ENCODE measurements at regions of chr5 and their contacts with region 1.

Region 1: DNA sequence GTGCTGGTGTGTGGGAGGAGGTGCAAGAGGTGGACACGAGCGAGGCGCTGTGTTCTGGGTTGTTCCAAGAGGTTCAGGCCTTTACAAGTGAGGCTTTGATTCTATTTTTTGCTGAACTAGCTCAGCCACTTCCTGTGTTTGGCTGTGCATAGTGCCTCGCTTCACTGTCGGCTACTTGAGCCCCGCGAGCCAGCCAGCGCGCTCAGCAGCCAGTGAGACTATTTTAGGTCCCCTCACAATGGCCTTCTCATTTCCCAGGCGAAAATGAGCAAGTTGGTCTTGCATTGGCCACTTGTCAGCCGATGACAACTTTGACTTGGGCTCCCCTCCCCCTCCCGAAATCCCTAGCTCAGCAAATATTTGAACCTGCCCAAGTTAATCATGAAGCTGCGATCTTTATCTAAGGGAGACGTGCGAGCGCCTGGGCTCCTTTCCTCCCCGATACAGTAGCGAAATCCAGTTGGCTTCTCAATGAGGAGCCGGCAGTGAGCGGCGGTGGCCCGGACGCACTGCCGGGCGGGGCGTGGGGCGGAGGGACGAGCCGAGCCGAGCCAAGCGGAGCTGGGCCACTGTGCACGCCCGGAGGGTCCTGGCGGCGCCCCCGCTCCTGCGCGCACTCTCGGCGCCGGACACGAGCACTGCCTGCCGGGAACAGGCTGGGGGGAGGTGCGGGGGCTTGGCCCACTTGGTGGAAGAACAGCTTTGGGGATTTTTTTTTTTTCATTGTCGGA is 72.6 kb downstream of the PIK3R1 start:
- DNase-seq: peak; percentile 73
- CTCF ChIP-seq: no peak

Region 2: DNA sequence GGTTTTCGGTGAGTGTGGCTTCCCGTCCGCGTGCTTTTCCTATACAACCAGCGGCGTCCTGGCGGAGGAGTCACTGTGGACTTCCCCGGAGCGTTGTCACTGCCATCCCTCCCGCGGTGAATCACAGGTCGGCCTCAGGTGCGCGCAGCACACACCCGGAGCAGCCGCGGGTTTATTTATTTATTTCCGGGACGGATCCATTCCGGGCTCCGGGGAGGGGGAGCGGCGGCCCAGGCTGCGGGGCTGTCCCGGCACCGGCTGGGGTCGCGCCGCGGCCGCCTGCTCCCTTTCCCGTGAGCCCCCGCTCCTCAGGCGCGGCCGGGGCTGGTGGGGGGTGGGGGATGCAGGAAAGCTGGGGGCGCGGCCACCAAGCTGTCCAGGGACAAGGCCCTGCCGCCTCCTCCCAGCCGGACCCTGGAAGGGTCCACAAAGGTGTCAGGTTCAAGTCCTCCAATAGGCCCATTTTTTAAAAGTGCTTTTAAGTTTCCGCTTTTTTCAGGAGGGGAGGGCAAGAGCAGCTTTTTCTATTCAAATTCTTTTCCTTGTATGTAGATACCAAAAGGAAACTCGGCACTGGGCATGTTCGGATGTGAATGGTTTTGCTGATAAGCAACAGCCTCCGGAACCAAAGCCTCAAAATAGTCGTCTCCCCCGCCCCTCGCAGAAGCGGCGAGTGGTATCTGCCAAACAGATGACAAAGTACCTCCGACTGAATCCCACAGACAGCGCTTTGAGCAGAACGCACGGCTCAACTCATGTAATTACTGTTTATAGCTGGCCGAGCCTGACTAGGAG is 1284.0 kb before region 1 on chr5:
- CTCF ChIA-PET with region 1: no interaction called
- POLR2A ChIA-PET with region 1: no interaction called
- DNase-seq: peak; percentile 31
- CTCF ChIP-seq: no peak

Region 3: DNA sequence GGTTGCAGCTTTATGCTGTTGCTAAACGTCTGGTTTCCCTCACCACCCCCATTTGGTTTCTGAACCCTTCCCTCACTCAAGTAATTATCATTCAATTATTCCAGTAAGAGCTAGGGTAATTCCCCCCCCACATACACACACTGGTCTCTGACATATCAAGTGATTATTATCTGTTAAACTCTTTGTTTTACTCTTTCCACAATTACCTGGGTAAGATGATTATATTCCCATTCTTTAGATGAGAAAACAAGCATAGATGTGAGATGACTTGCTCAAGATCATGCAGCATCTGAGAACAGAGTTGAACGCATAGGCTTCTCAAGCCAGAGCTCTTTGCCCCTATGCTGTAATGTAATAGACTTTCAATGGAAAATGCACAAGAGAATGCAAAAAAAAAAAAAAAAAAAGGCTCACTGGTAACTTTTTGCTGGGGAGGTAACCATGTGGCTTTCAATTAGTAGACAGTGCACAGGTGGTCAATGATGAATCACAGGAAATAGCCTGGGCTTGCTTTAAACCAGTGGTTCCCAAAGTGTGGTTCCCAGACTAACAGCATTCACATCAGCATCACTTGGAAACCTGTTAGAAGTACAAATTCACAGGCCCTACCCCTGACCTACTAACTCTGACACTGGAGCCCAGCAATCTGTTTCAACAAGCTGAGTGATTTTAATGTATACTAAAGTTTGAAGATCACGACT is 15.0 kb after region 1 on chr5:
- CTCF ChIA-PET with region 1: interaction called, 30 read pairs
- POLR2A ChIA-PET with region 1: interaction called, 3 read pairs
- DNase-seq: peak; percentile 34
- CTCF ChIP-seq: no peak

Region 4: GRCh38 chr5:68331192-68332079 is 43.3 kb after region 1 on chr5:
- CTCF ChIA-PET with region 1: interaction called, 10 read pairs
- POLR2A ChIA-PET with region 1: no interaction called
- DNase-seq: peak; percentile 28
- CTCF ChIP-seq: no peak

Region 5: DNA sequence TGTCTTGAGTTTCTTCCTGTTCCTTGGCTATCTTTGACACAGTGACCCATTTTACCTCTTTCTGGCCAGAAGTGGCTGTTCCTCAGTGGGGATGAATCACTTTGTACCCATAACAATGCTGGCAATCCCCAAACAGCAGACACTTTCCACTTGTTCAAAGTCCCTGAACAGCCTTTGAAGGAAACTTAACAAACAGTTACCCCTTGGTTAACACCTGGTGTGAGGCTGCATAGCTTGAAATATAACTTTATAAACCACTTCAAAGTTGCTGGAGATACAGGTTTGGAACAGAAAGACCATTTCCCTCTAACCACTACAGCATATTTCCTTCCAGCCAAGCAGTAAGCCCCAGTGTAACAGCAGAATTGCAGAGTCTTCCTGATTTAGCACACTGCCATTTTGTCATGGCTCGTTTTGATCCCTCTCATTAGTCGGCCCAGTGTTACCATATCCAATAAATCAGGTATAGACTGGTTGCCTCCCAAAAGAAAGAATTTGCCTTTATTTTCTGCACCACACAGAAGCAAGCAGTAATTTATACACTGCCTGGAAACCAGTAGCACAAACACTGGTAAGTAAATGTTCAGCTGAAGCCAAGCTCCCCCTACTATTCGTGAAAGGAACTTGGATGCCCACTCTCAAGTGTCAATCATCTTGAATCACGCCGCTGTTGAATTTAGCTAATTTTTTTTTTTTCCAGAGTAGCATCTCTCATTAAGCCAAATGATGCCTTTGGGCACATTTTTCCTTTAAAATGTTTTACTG is 153.3 kb after region 1 on chr5:
- CTCF ChIA-PET with region 1: interaction called, 10 read pairs
- POLR2A ChIA-PET with region 1: no interaction called
- DNase-seq: no peak
- CTCF ChIP-seq: no peak

Region 6: GRCh38 chr5:68460147-68460798 is 172.1 kb after region 1 on chr5:
- CTCF ChIA-PET with region 1: interaction called, 41 read pairs
- POLR2A ChIA-PET with region 1: no interaction called
- DNase-seq: peak; percentile 35
- CTCF ChIP-seq: peak; percentile 65

Region 7: DNA sequence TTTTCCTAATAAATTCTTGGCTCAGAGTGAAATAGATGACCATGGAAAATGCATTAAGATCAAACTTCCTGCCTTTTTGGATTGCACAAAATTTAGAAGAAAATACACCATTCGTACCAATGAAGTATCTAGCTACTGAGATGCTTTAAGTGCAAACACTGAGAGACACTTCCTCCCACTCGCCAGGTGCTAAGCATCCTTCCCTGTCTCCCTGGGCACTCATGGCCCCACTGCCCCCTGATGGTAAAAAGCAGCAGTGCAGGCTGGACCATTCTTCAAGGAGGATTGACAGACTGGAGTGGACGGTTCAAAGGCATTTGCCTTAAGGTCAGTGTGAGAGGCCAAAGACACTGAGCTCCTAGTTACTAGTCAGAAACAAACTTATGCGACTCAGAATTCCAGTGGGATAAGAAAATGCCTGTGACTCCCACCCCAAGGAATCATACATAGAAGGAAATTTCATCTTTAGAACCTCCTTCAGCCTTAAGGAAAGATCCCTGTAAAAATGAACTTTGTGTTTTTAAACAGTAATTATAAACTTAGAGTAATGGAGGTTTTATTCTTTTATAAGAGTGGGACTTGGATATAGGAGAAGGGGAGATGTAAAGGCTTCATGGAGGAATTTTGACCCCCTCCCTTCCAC is 719.7 kb after region 1 on chr5:
- CTCF ChIA-PET with region 1: interaction called, 18 read pairs
- POLR2A ChIA-PET with region 1: no interaction called
- DNase-seq: peak; percentile 65
- CTCF ChIP-seq: peak; percentile 97

Measured in GM10248 (cell line).